ENCODE measurements at regions of chr6 and their contacts with region 1.

Region 1: GRCh38 chr6:12605888-12606345 is 110.7 kb upstream of the PHACTR1 start:
- DNase-seq: no peak
- ATAC-seq: peak; percentile 73
- H3K4me3 ChIP-seq: no peak overlapping the region
- H3K27ac ChIP-seq: no peak overlapping the region
- H3K4me1 ChIP-seq: peaks cover 3 to 14% of the 10 kb centered on the region in 2 donors
- H3K27me3 ChIP-seq: no peaks in the 10 kb centered on the region

Region 2: GRCh38 chr6:11585426-11586016 is 1020.4 kb before region 1 on chr6:
- intact Hi-C with region 1: loop called in 1 of 2 experiments (anchors 10 kb)
- DNase-seq: no peak
- ATAC-seq: no peak
- H3K4me3 ChIP-seq: no peak overlapping the region
- H3K27ac ChIP-seq: no peak overlapping the region
- H3K4me1 ChIP-seq: peaks cover 0 to 4% of the 10 kb centered on the region in 2 donors
- H3K27me3 ChIP-seq: no peaks in the 10 kb centered on the region

Region 3: GRCh38 chr6:11653028-11653583 is 952.8 kb before region 1 on chr6:
- intact Hi-C with region 1: loop called in 1 of 2 experiments (anchors 10 kb)
- DNase-seq: peak in 1 of 2 donors; percentile 56
- ATAC-seq: no peak
- H3K4me3 ChIP-seq: no peak overlapping the region
- H3K27ac ChIP-seq: peak overlapping the region in 1 of 2 donors; percentile 6
- H3K4me1 ChIP-seq: peaks cover 0 to 3% of the 10 kb centered on the region in 2 donors
- H3K27me3 ChIP-seq: no peaks in the 10 kb centered on the region

Region 4: DNA sequence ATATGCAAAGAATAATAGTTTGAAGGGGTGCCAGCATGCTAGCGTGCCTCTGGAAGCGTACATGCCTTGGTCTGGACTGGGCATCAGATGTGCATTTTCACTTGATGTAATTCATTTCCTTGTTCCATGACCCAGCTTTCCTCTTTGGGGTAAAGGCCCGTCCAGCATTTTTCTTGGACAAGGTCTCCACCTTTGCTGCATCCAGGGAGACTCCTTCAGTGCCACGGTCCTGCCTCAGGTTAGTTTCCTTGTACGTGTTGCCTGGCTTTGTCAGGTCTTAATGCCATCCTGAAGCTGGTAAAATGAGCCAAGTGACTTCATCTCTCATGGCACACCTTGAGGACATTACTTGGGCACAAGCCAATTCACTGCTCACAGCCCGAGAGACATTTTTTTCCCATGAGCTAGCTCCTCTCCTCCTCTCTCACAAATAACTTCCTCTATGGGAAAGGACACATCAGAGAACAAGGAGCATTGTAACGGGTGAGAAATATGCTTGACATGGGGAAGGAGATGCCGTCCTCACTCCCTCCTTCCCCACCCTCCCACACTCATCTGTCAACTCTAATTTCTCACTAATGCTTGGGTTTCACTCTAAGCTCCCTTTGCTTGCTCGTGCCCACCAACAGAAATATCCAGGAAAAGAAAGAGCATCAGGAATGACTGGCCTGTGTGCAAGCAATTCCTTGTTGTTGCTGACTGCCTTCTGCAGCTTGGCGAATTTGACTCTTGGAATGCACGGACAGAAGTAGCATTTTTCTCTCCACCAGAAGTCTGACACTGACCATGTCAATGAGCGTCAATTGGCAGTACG is 291.7 kb before region 1 on chr6:
- intact Hi-C with region 1: loop called in 1 of 2 experiments (anchors 5 kb)
- DNase-seq: no peak
- ATAC-seq: peak; percentile 52
- H3K4me3 ChIP-seq: peak overlapping the region in 1 of 2 donors; percentile 11
- H3K27ac ChIP-seq: peak overlapping the region; percentile 57 to 94
- H3K4me1 ChIP-seq: peaks cover 0 to 3% of the 10 kb centered on the region in 2 donors
- H3K27me3 ChIP-seq: no peaks in the 10 kb centered on the region

Region 5: DNA sequence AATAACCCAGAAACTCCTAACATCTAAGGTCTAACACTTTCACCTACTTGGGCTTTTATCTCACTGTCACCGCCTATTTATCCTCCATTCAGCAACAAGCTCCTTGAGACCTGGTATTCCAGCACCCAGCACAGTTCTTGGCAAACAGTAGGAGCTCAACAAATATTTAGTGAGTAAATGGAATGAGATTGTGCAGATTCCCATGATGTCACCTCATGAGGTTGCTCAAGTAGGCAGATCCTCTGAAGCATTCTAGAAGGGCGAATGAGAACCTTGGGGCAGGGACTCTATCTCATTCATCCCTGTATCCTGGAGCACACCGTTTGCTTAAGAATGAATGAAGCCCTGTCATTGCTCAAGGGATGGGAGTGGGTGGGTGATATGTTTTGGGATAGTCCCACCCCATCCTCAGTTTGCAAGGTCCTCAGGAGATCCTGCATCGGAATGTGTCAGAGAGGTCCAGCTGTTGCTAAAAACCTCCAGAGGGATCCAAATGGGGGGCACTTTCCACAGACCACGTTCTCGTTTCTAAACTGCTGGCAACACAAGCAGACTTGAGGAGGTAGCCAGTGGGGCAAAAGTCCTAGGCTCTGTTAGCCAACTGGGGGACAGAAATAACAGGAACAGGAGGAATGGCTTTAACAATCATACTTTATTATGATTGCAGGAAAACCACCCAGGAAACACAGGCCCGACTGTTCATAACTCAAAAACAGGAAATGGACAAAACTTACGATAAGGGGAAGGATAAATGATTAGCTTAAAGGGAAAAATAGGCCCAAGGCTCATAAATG is 273.8 kb before region 1 on chr6:
- intact Hi-C with region 1: no loop called
- DNase-seq: no peak
- ATAC-seq: no peak
- H3K4me3 ChIP-seq: no peak overlapping the region
- H3K27ac ChIP-seq: peak overlapping the region; percentile 76 to 91
- H3K4me1 ChIP-seq: peaks cover 4 to 12% of the 10 kb centered on the region in 2 donors
- H3K27me3 ChIP-seq: no peaks in the 10 kb centered on the region

Region 6: GRCh38 chr6:12472601-12473038 is 133.3 kb before region 1 on chr6:
- intact Hi-C with region 1: no loop called
- DNase-seq: peak; percentile 81 to 87
- ATAC-seq: peak; percentile 92
- H3K4me3 ChIP-seq: no peak overlapping the region
- H3K27ac ChIP-seq: peak overlapping the region; percentile 4 to 99
- H3K4me1 ChIP-seq: peaks cover 9 to 11% of the 10 kb centered on the region in 2 donors
- H3K27me3 ChIP-seq: no peaks in the 10 kb centered on the region

Region 7: DNA sequence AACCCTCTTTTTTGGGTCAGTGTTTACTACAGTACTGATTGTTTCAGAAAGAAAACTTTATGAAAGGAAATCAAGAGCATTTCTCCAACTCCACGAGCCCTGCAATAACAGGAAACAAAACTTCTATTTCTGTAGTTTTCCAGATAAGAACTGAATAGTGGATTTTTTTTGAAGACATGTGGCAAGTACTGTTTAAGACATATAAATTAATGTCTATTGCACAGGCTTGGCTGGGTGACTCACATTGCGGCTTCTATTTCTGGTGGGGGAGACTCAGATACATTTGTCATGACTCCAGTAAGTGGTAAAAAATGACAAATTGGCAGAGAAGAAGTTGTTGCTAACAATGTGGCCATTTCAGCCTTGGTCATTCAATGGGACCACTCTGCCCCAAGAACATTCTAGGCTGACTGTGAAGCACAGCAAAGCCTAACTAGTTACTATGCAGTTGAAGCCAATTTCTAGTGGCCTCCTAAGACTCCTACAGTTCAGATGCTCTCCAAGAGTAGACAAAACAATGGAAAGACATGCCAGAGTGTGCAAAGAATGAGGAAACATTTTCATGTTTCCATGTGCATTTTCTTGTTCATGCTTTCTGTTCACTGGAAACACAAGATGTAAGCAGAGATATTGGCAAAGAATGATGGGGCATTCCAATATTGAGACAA is 114.9 kb before region 1 on chr6:
- intact Hi-C with region 1: loop called in 1 of 2 experiments (anchors 5 kb)
- DNase-seq: peak in 1 of 2 donors; percentile 75
- ATAC-seq: peak; percentile 83
- H3K4me3 ChIP-seq: no peak overlapping the region
- H3K27ac ChIP-seq: peak overlapping the region; percentile 45 to 59
- H3K4me1 ChIP-seq: peaks cover 2 to 10% of the 10 kb centered on the region in 2 donors
- H3K27me3 ChIP-seq: no peaks in the 10 kb centered on the region